Heart left ventricle (tissue), 16 donors: ENCODE measurements at regions of chr6 and their contacts with region 1.

Region 1: DNA sequence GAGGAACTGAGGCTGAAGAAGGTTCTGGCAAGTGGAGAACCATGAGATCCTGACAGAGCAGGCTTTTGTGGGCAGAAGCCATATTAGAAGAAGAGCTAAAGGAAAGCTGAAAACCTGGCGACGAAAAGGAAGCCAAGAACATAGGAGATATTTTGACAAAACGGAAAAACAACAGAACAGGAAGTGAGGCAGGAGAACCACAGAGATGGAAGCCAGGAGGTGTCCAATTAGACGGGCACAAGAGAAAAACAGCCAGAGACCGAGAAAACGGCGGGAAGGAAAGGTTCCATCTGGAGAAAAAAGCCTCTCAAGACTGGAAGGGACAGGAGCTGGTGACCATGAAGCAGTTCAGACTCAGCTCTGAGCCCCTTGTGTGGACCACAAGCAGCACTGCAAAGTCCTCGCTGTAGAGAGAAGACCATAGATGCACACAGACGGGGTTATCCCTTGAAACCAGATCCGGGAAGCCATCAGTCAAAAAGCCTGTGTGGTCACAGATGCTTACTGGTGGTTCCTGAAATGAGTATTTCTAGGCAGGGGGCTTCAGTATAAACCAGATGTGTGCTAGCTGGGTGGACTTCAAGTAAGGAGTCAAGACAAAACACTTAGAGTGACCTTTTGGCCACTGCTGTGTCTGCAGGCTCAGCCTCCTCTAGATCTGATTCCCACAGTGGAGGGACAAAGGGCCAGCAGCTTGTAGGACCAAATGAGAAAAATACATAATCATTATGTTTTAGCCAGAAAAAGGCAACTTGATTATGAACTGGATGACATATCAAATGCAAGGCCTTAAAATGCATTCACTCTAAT is 30.7 kb downstream of the SSR1 start:
- DNase-seq: no peak
- ATAC-seq: no peak
- H3K4me3 ChIP-seq: no peak overlapping the region
- H3K27ac ChIP-seq: peak overlapping the region in 1 of 12 donors; percentile 9
- H3K4me1 ChIP-seq: peaks cover 0 to 20% (median 0%) of the 10 kb centered on the region in 12 donors
- H3K27me3 ChIP-seq: no peaks in the 10 kb centered on the region
- CTCF ChIP-seq: no peak
- POLR2A ChIP-seq: no peak

Region 2: DNA sequence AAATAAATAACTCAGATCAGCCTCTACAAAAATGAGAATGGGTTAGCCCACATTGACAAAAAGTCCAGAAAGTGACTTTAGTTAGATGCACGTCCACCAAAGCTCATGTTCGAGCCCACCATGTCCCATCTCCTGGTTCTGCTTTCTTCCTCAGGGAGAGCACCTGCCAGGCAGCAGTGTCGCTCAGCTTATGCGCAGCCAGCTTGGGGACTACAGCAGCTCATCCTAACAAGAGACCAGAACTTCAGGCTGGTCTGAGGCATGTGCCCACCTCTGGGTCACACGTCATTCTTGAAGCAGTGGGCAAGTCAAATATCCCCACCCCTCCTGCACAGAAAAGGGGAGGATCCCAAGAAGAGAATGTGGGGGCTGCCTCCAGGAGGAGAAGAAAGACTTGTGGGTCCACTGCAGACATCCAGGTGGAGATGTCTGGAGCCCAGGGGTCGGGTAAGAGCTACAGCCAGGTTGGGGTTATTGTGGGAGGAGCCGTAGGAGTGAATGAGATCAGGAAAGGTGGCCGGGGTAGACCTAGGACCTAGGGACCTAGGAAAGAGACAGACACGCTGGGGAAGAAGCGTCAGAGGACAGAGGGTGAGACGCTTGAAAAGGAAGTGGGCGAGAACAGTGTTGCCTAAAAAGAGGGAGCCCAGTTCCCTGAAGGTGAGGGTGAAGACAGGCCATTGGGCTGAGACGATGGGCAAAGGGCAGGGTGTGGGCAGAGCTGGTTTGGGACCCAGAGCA is 21.8 kb before region 1 on chr6:
- intact Hi-C with region 1: no loop called
- DNase-seq: peak in 1 of 5 donors; percentile 25
- ATAC-seq: peak; percentile 9 to 36 (median 16)
- H3K4me3 ChIP-seq: peak overlapping the region in 11 of 12 donors; percentile 42 to 77 (median 69)
- H3K27ac ChIP-seq: peak overlapping the region in 11 of 12 donors; percentile 35 to 86 (median 79)
- H3K4me1 ChIP-seq: peaks cover 0 to 42% (median 12%) of the 10 kb centered on the region in 12 donors
- H3K27me3 ChIP-seq: no peaks in the 10 kb centered on the region
- CTCF ChIP-seq: no peak
- POLR2A ChIP-seq: no peak

Region 3: GRCh38 chr6:7401075-7401474 is 118.8 kb after region 1 on chr6:
- intact Hi-C with region 1: loop called in 2 of 10 experiments (anchors 10 kb)
- DNase-seq: no peak
- ATAC-seq: no peak
- H3K4me3 ChIP-seq: no peak overlapping the region
- H3K27ac ChIP-seq: peak overlapping the region in 1 of 12 donors; percentile 2
- H3K4me1 ChIP-seq: peaks cover 0 to 6% (median 0%) of the 10 kb centered on the region in 12 donors
- H3K27me3 ChIP-seq: no peaks in the 10 kb centered on the region
- CTCF ChIP-seq: no peak
- POLR2A ChIP-seq: no peak

Region 4: GRCh38 chr6:7431674-7432390 is 149.5 kb after region 1 on chr6:
- intact Hi-C with region 1: no loop called
- DNase-seq: no peak
- ATAC-seq: peak in 1 of 4 donors; percentile 7
- H3K4me3 ChIP-seq: no peak overlapping the region
- H3K27ac ChIP-seq: no peak overlapping the region
- H3K4me1 ChIP-seq: no peaks in the 10 kb centered on the region
- H3K27me3 ChIP-seq: no peaks in the 10 kb centered on the region
- CTCF ChIP-seq: no peak
- POLR2A ChIP-seq: no peak